ENCODE measurements at regions of chr5 and their contacts with region 1.

Region 1: DNA sequence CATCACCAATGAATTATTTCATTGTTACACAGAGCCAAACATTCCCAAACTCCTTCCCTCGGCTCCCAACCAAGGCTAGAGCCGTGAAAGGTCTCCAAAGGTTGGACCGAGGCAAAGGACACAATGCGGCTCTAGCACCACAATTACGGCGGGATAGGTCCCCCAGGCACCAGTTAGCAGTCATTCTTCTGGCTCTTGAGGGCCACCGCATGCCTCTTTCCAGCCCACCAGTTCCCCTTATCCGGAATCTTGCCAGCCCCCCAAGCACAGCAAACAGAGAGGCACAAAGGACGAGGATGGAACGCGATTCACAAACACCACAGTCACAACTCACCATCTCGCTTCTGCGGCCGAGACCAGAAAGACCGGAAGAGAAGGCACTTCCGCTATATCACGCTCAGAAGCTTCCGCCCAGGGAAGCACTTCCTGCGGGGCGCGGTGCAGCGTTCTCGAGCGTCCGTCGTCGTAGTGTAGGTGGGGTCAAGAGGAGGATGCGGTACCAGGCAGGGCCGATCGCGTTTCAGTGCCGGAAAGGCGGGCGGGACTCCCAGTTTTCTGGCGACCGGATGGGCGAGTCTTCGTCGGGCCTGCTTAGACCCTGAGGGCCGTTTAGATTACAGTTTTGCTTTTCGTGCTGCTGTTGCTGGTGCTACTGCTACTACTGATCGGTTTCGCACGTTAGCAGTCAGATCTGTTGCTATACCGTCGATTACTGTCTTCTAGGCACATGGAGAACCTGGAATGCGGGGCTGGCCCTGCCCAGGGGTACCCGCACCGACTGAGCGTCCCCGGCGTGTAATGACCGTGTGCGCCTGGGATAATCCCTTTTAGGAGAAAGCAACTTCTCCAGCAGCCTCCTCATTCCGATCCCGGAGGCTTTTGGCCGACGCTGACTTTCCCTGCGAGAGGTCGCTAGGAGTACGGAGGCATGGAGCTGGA is at the start of gene RPL37:
- DNase-seq: peak; percentile 80 to 98
- H3K4me3 ChIP-seq: peak within 1 kb of the TSS; percentile 70 to 75
- H3K27ac ChIP-seq: peak within 1 kb of the TSS; percentile 94 to 99
- H3K4me1 ChIP-seq: peaks cover 4 to 15% of the 10 kb centered on the region in 2 donors
- H3K27me3 ChIP-seq: no peaks in the 10 kb centered on the region
- CTCF ChIP-seq: no peak
- total RNA-seq, gene RPL37: 22.1 TPM

Region 2: DNA sequence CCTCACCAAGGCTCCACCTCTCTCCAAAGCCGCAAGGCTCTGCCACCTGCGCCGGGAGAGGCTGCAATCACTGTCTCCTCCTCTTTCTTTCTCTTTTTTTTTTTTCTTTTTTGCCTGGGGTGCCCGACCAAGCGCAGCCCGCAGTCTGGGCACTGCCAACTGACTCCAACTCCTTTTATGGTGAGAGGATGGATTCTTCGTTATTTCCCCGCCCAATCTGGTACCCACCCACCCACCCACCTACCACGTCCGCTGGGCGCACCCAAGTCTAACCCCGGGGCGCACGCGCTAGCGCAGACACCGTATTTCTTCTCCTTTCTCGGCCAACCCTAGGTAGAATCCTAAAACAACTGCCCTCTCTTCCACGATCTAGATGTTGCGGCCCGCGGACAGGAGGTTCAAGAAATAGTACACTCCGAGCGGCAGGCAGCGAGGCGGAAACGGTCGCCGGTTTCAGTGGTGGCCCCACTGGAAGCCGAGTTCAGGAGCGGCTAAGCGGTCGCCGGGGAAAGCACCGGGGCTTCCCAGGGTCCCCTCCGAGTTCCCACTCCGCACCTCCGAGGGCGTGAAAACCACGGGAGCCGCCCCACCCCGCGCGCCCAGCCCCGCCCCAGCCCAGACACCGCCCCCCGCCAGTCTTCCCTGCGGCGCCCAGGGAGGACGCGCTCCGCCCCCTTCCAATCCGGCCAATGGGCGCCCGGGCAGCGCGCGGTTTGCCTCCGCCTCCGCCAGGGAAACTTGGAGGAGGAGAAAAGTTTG is 155.8 kb before region 1 on chr5:
- intact Hi-C with region 1: loop called (anchors 5 kb)
- DNase-seq: peak; percentile 71 to 94
- H3K4me3 ChIP-seq: peak overlapping the region; percentile 77 to 80
- H3K27ac ChIP-seq: peak overlapping the region; percentile 78 to 91
- H3K4me1 ChIP-seq: no peaks in the 10 kb centered on the region
- H3K27me3 ChIP-seq: no peaks in the 10 kb centered on the region
- CTCF ChIP-seq: no peak

Region 3: GRCh38 chr5:40762705-40763104 is 72.4 kb before region 1 on chr5:
- intact Hi-C with region 1: no loop called
- DNase-seq: no peak
- H3K4me3 ChIP-seq: no peak overlapping the region
- H3K27ac ChIP-seq: no peak overlapping the region
- H3K4me1 ChIP-seq: no peaks in the 10 kb centered on the region
- H3K27me3 ChIP-seq: no peaks in the 10 kb centered on the region
- CTCF ChIP-seq: no peak

Region 4: GRCh38 chr5:40798012-40798855 is 36.9 kb before region 1 on chr5 and contains the start of gene PRKAA1:
- intact Hi-C with region 1: loop called (anchors 1 kb)
- DNase-seq: peak; percentile 67 to 96
- H3K4me3 ChIP-seq: peak within 1 kb of the TSS; percentile 98 to 99
- H3K27ac ChIP-seq: peak within 1 kb of the TSS; percentile 88 to 95
- H3K4me1 ChIP-seq: peaks cover 9 to 12% of the 10 kb centered on the region in 2 donors
- H3K27me3 ChIP-seq: no peaks in the 10 kb centered on the region
- CTCF ChIP-seq: peak; percentile 33 to 73 (median 54)
- total RNA-seq, gene PRKAA1: 90.3 TPM